Endothelial cell of umbilical vein (primary cell): ENCODE measurements at regions of chr7 and their contacts with region 1.

Region 1: GRCh38 chr7:157138424-157139110 is at the start of gene UBE3C:
- DNase-seq: peak; percentile 94
- H3K4me3 ChIP-seq: peak within 1 kb of the TSS; percentile 70 to 87 (median 71)
- H3K27ac ChIP-seq: peak within 1 kb of the TSS; percentile 58
- H3K4me1 ChIP-seq: peaks cover 24% of the 10 kb centered on the region
- H3K27me3 ChIP-seq: no peaks in the 10 kb centered on the region
- CTCF ChIP-seq: peak in 1 of 2 donors; percentile 4
- POLR2A ChIP-seq: peak; percentile 70
- total RNA-seq, gene UBE3C: 75.9 and 77.3 TPM in 2 replicates

Region 2: DNA sequence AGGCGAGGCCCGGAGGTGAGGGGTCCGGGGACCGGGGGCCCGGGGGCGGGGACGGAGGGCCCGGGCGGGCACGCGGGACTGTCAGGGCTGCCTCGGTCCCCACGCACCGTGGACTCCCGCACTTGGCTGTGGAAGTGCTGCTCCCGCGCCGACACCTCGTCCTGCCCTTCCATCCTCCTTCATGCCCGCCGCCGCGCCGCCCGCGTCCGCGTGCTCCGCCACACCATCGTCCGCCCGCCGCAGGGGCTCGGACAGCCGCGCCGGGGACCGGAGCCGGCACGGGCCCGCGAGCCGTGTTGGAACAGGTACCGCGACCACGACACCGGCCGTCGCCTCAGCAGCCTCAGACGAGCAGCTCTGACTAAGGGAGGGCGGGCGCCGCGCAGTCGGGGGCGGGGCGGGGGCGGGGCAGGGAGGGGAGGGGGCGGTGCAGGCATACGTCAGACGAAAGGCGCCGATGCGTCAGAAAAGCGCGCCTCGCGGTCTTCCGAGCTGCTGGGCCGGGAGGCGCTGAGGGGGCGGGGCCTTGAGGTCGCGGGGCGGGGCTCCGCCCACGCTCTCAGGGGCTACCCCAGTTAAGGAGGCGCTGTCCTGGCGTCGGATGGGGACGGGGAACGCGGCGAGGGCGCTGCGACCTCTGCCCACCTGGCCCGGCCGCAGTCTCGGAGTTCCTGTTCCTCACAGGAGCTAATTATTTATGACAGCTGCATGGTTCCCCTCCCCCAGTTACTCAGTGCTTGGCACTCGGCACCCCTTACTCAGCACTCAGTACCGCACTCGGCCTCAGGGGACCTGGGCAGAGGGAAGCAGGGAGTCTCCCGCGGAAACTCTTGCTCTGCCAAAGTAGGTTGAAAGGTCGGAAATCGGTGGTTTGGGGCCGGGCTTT is 245.5 kb before region 1 on chr7 and contains the start of gene LMBR1:
- CTCF ChIA-PET with region 1: no interaction called
- POLR2A ChIA-PET with region 1: no interaction called
- dilution Hi-C with region 1: no loop called
- intact Hi-C with region 1: loop called (anchors 1 kb)
- DNase-seq: peak; percentile 96
- H3K4me3 ChIP-seq: peak within 1 kb of the TSS; percentile 90 to 94 (median 91)
- H3K27ac ChIP-seq: peak within 1 kb of the TSS; percentile 83
- H3K4me1 ChIP-seq: peaks cover 19% of the 10 kb centered on the region
- H3K27me3 ChIP-seq: no peaks in the 10 kb centered on the region
- CTCF ChIP-seq: peak; percentile 35 to 66
- POLR2A ChIP-seq: peak; percentile 79
- total RNA-seq, gene LMBR1: 57.7 and 72.9 TPM in 2 replicates

Region 3: GRCh38 chr7:156949541-156950380 is 188.8 kb before region 1 on chr7 and contains the start of gene NOM1:
- CTCF ChIA-PET with region 1: interaction called, 5 read pairs
- POLR2A ChIA-PET with region 1: no interaction called
- dilution Hi-C with region 1: no loop called
- intact Hi-C with region 1: loop called (anchors 5 kb)
- DNase-seq: peak; percentile 80
- H3K4me3 ChIP-seq: peak within 1 kb of the TSS; percentile 72 to 92 (median 83)
- H3K27ac ChIP-seq: peak within 1 kb of the TSS; percentile 49
- H3K4me1 ChIP-seq: peaks cover 21% of the 10 kb centered on the region
- H3K27me3 ChIP-seq: peaks cover under 1 to 1% of the 10 kb centered on the region in 2 experiments
- CTCF ChIP-seq: peak; percentile 72 to 79
- POLR2A ChIP-seq: peak; percentile 79
- total RNA-seq, gene NOM1: 36.7 and 38.6 TPM in 2 replicates

Region 4: DNA sequence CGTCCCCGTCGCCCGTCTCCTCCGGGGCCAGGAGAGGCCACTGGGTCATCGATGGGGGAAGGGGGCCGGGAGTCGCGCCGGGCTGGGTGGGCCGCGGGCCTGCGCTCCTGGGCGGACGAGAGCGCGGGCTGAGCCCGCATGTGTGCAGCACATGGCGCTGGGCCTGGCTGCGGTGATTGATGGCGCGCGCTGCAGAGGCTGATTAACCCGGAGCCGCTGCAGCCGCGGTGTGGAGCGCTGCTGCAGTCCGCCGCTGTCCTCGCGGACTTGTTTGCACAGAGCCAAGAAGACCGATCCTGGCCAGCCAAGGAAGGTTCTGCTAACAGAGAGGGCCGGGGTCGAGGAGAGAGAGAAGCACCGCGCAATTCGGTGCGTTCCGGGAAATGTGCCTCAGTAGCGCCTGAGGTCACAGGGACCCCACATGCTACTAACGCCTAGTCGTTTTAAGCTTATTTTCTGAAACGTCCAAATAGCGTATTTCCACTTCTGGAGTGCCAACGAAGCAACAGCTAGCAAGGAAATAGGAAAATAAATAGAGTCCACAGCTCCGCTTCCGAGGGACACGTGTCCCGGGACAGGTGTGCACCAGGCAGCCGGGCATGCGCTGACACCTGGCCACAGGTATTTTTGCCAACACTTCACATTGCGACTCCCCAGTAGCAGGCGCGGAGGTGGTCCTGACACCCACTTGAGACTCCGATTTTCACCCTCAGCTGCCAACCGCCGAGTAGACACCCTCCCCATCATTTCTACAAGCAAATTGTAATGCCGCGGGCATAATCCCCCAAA is 134.3 kb before region 1 on chr7:
- CTCF ChIA-PET with region 1: no interaction called
- POLR2A ChIA-PET with region 1: no interaction called
- dilution Hi-C with region 1: no loop called
- intact Hi-C with region 1: loop called (anchors 5 kb)
- DNase-seq: peak; percentile 39
- H3K4me3 ChIP-seq: no peak overlapping the region
- H3K27ac ChIP-seq: no peak overlapping the region
- H3K4me1 ChIP-seq: peaks cover 8% of the 10 kb centered on the region
- H3K27me3 ChIP-seq: peaks cover 75 to 98% of the 10 kb centered on the region in 2 experiments
- CTCF ChIP-seq: no peak
- POLR2A ChIP-seq: no peak

Region 5: DNA sequence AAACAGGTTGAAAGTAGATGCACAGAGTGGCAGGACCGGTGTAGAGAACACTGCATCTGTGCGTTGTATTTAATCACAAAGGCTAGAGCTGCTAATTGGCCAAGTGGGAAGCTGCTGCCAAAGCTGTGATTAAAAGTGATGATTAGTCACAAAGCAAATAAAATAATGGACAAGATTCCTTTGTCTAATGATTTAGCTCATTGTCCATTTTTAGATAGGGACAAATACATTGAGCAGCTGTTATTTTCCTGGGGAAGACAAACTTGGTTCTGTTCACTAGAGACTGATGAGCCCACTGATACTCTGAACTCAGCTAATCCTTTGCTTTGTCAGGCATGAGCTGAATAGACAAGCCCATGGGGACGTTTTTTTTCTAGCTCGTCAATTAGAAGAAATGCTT is 19.8 kb after region 1 on chr7:
- CTCF ChIA-PET with region 1: interaction called, 4 read pairs
- POLR2A ChIA-PET with region 1: interaction called, 3 read pairs
- dilution Hi-C with region 1: no loop called
- intact Hi-C with region 1: loop called (anchors 2 kb)
- DNase-seq: peak; percentile 82
- H3K4me3 ChIP-seq: peak overlapping the region in 1 of 3 experiments; percentile 29
- H3K27ac ChIP-seq: peak overlapping the region; percentile 54
- H3K4me1 ChIP-seq: peaks cover 17% of the 10 kb centered on the region
- H3K27me3 ChIP-seq: no peaks in the 10 kb centered on the region
- CTCF ChIP-seq: no peak
- POLR2A ChIP-seq: no peak